Activated naive CD4-positive, alpha-beta T cell treated with anti-CD3 and anti-CD28 coated beads for 36 hours (primary cell): ENCODE measurements at regions of chr5 and their contacts with region 1.

Region 1: GRCh38 chr5:173232499-173233346 is 2.3 kb downstream of the NKX2-5 start:
- DNase-seq: no peak
- H3K4me3 Mint-ChIP-seq: peak overlapping the region; percentile 47
- H3K27ac Mint-ChIP-seq: no peak overlapping the region
- H3K4me1 Mint-ChIP-seq: peaks cover 56% of the 10 kb centered on the region
- H3K27me3 Mint-ChIP-seq: peaks cover 87% of the 10 kb centered on the region

Region 2: GRCh38 chr5:173245319-173246134 is 12.8 kb after region 1 on chr5:
- CTCF ChIA-PET with region 1: interaction called, 3 read pairs
- intact Hi-C with region 1: loop called (anchors 2 kb)
- DNase-seq: no peak
- H3K4me3 Mint-ChIP-seq: no peak overlapping the region
- H3K27ac Mint-ChIP-seq: no peak overlapping the region
- H3K4me1 Mint-ChIP-seq: peaks cover 15% of the 10 kb centered on the region
- H3K27me3 Mint-ChIP-seq: peaks cover 79% of the 10 kb centered on the region